Psoas muscle (tissue), 8 donors: ENCODE measurements at regions of chr17 and their contacts with region 1.

Region 1: GRCh38 chr17:77066165-77066564 is 74.6 kb upstream of the SEC14L1 start:
- DNase-seq: no peak
- ATAC-seq: no peak
- H3K4me3 ChIP-seq: no peak overlapping the region
- H3K27ac ChIP-seq: no peak overlapping the region
- H3K4me1 ChIP-seq: no peaks in the 10 kb centered on the region
- H3K27me3 ChIP-seq: peaks cover 0 to 20% (median 0%) of the 10 kb centered on the region in 3 donors
- CTCF ChIP-seq: no peak

Region 2: GRCh38 chr17:75645889-75646637 is 1420.1 kb before region 1 on chr17:
- intact Hi-C with region 1: no loop called
- DNase-seq: no peak
- ATAC-seq: peak; percentile 20 to 40 (median 34)
- H3K4me3 ChIP-seq: no peak overlapping the region
- H3K27ac ChIP-seq: no peak overlapping the region
- H3K4me1 ChIP-seq: no peaks in the 10 kb centered on the region
- H3K27me3 ChIP-seq: no peaks in the 10 kb centered on the region
- CTCF ChIP-seq: no peak

Region 3: DNA sequence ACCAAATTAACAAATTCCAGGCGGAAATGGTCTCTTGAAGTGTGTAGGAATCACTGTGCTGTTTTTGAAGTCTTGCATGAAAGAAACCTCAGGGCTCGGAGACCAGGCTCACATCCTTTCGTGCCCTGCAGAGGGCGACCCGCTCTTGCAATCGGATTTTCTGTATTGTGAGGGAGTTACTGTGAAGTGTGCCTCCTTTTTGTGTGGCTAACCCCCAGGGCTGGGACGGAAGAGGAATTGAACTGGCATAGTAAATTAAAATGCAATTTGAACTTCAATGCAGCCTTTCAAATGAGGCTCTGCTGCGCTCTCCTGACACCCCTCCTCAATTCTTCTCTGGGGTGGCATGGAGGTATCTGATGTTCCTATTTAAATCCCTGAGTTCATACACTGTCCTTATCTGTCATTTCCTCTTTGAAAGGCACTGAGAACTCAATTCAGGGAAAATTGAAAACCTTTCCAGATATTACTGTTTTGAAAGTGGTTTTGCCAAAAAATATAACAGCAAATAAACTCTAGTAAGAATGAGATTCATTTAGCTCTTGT is 249.5 kb before region 1 on chr17:
- intact Hi-C with region 1: loop called in 1 of 2 experiments (anchors 2 kb)
- DNase-seq: no peak
- ATAC-seq: no peak
- H3K4me3 ChIP-seq: no peak overlapping the region
- H3K27ac ChIP-seq: no peak overlapping the region
- H3K4me1 ChIP-seq: no peaks in the 10 kb centered on the region
- H3K27me3 ChIP-seq: peaks cover 0 to 9% (median 6%) of the 10 kb centered on the region in 3 donors
- CTCF ChIP-seq: peak; percentile 40

Region 4: GRCh38 chr17:77453613-77454241 is 387.6 kb after region 1 on chr17:
- intact Hi-C with region 1: no loop called
- DNase-seq: no peak
- ATAC-seq: no peak
- H3K4me3 ChIP-seq: peak overlapping the region; percentile 25
- H3K27ac ChIP-seq: peak overlapping the region; percentile 32
- H3K4me1 ChIP-seq: peaks cover 34% of the 10 kb centered on the region
- H3K27me3 ChIP-seq: no peaks in the 10 kb centered on the region
- CTCF ChIP-seq: no peak